ENCODE measurements at regions of chr4 and their contacts with region 1.

Region 1: GRCh38 chr4:180314972-180315371 is 1928.2 kb upstream of the TENM3 start:
- DNase-seq: no peak

Region 2: GRCh38 chr4:180377741-180378140 is 62.8 kb after region 1 on chr4:
- in situ Hi-C with region 1: loop called (anchors 5 kb)
- DNase-seq: no peak

Region 3: DNA sequence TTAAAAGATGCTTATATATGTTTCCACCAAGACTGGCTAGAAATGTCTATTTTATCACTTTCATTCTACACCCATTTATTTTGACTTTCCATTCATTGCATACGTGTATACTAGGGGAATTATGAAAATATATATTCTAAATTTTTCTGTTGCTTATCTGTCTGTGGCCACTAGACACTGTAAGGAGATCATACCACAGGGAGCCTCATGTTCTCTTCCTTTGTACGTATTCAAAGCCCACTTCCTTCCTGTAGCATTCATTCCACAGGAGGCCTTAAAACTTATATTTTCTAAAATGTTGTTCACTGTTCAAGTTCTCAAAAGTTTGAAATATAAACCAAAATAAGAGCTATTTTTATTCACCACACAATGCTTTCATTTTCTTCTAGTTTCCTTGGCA is 79.3 kb after region 1 on chr4:
- in situ Hi-C with region 1: no loop called
- DNase-seq: no peak

Measured in SK-MEL-5 (cell line).